CD4-positive, alpha-beta T cell (primary cell): ENCODE measurements at regions of chr14 and their contacts with region 1.

Region 1: GRCh38 chr14:49977126-49977841 is 84.4 kb downstream of the ARF6 start:
- DNase-seq: peak in 9 of 14 experiments; percentile 12 to 83 (median 40)
- ATAC-seq: peak; percentile 86
- H3K4me3 ChIP-seq: peak overlapping the region; percentile 41
- H3K4me3 Mint-ChIP-seq: peak overlapping the region; percentile 74
- H3K27ac ChIP-seq: peak overlapping the region; percentile 67 to 85
- H3K27ac Mint-ChIP-seq: peak overlapping the region; percentile 90
- H3K4me1 ChIP-seq: peaks cover 94% of the 10 kb centered on the region
- H3K4me1 Mint-ChIP-seq: peaks cover 83% of the 10 kb centered on the region
- H3K27me3 ChIP-seq: no peaks in the 10 kb centered on the region
- H3K27me3 Mint-ChIP-seq: no peaks in the 10 kb centered on the region
- CTCF ChIP-seq: no peak

Region 2: DNA sequence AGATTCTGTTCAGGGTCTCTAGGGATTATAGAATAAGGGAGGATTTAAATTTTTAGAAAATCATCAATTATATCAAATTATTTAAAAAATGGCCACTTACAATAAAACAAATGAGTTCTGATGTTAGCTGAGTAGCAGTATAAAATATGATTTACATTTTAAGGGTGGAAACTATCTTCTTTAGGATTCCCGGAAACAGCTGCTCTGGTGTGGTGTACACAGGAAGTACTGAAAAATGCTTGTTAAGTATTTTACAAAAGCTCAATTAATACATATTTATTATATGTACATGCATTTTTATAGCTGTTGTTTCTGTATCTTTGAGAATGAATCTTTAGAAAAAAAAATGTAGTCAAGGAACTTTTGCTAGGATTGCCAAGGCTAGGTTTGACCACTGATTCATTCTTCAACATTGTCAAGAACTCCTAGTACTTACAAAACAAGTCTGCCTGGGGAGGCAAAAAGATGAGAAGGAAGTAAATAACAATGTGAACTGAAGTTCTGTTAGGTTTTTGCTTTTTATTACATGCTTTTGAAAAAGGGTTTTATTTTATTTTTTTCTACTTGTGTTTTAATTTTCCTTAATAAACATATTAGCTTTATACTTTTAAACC is 36.4 kb before region 1 on chr14:
- CTCF ChIA-PET with region 1: interaction called, 5 read pairs
- POLR2A ChIA-PET with region 1: interaction called, 62 read pairs
- intact Hi-C with region 1: loop called in 1 of 2 experiments (anchors 5 kb)
- DNase-seq: peak in 6 of 14 experiments; percentile 10 to 75 (median 34)
- ATAC-seq: peak; percentile 68
- H3K4me3 ChIP-seq: peak overlapping the region; percentile 19
- H3K4me3 Mint-ChIP-seq: peak overlapping the region; percentile 69
- H3K27ac ChIP-seq: peak overlapping the region in 1 of 2 donors; percentile 38
- H3K27ac Mint-ChIP-seq: peak overlapping the region; percentile 57
- H3K4me1 ChIP-seq: peaks cover 47% of the 10 kb centered on the region
- H3K4me1 Mint-ChIP-seq: peaks cover 68% of the 10 kb centered on the region
- H3K27me3 ChIP-seq: no peaks in the 10 kb centered on the region
- H3K27me3 Mint-ChIP-seq: no peaks in the 10 kb centered on the region
- CTCF ChIP-seq: no peak

Region 3: GRCh38 chr14:49946320-49947141 is 30.8 kb before region 1 on chr14:
- CTCF ChIA-PET with region 1: interaction called, 5 read pairs
- POLR2A ChIA-PET with region 1: interaction called, 62 read pairs
- intact Hi-C with region 1: loop called in 1 of 2 experiments (anchors 5 kb)
- DNase-seq: peak in 10 of 14 experiments; percentile 10 to 66 (median 26)
- ATAC-seq: peak; percentile 72
- H3K4me3 ChIP-seq: no peak overlapping the region
- H3K4me3 Mint-ChIP-seq: peak overlapping the region; percentile 56
- H3K27ac ChIP-seq: peak overlapping the region; percentile 69 to 86
- H3K27ac Mint-ChIP-seq: peak overlapping the region; percentile 88
- H3K4me1 ChIP-seq: peaks cover 66% of the 10 kb centered on the region
- H3K4me1 Mint-ChIP-seq: peaks cover 78% of the 10 kb centered on the region
- H3K27me3 ChIP-seq: no peaks in the 10 kb centered on the region
- H3K27me3 Mint-ChIP-seq: no peaks in the 10 kb centered on the region
- CTCF ChIP-seq: no peak

Region 4: GRCh38 chr14:50148799-50149198 is 171.5 kb after region 1 on chr14:
- CTCF ChIA-PET with region 1: no interaction called
- POLR2A ChIA-PET with region 1: no interaction called
- intact Hi-C with region 1: no loop called
- DNase-seq: no peak
- ATAC-seq: no peak
- H3K4me3 ChIP-seq: no peak overlapping the region
- H3K4me3 Mint-ChIP-seq: no peak overlapping the region
- H3K27ac ChIP-seq: no peak overlapping the region
- H3K27ac Mint-ChIP-seq: no peak overlapping the region
- H3K4me1 ChIP-seq: no peaks in the 10 kb centered on the region
- H3K4me1 Mint-ChIP-seq: no peaks in the 10 kb centered on the region
- H3K27me3 ChIP-seq: no peaks in the 10 kb centered on the region
- H3K27me3 Mint-ChIP-seq: no peaks in the 10 kb centered on the region
- CTCF ChIP-seq: no peak